ENCODE measurements at regions of chr6 and their contacts with region 1.

Region 1: DNA sequence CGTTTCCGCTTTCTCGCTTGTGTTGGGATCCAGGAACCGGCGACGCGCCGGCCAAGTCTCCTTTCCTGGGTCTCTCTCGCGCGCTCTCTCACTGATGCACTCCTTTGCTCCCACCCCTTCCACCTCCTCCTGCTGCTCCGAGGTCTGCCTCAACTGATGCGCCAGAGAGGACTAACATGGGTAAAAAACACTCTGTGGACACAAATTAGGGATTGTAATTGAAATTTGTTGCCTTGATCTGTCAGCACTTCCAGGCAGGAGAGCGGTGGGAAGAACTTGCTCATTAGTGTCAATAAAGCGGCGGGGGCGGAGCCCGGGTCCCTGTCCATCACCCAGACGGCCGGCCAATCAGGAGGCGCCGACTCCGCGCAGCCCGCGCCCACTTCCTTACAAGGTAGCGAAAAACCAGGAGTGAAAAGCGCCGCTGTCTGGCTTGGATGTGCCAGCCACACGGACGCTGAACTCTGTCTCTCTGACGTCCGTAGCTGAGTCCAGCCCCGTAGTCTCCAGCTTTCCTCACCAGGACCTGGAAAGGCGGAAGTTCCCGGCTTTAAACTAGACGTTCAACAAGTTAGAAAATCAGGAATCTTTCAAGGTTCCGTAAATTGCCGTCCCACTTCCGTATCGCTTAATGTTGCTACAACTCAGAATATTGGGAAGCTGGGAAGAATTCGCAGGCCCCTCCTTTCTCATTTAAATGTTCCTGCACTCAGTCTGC is at the start of gene TBX18:
- DNase-seq: peak; percentile 99
- H3K4me3 ChIP-seq: peak within 1 kb of the TSS; percentile 67 to 81 (median 72)
- H3K27ac ChIP-seq: peak within 1 kb of the TSS; percentile 93 to 98 (median 95)
- H3K4me1 ChIP-seq: peaks cover 11 to 44% (median 37%) of the 10 kb centered on the region in 4 donors
- H3K27me3 ChIP-seq: peaks cover 0 to 92% (median 51%) of the 10 kb centered on the region in 4 donors
- CTCF ChIP-seq: no peak
- EP300 ChIP-seq: peak; percentile 47
- POLR2A ChIP-seq: no peak
- total RNA-seq, gene TBX18: 8.7 to 17.4 (median 11.2) TPM

Region 2: GRCh38 chr6:84422380-84422968 is 342.0 kb before region 1 on chr6:
- intact Hi-C with region 1: loop called (anchors 5 kb)
- DNase-seq: no peak
- H3K4me3 ChIP-seq: no peak overlapping the region
- H3K27ac ChIP-seq: no peak overlapping the region
- H3K4me1 ChIP-seq: peaks cover 0 to 5% (median 2%) of the 10 kb centered on the region in 4 donors
- H3K27me3 ChIP-seq: peaks cover 0 to 38% (median 0%) of the 10 kb centered on the region in 4 donors
- CTCF ChIP-seq: peak; percentile 52 to 60 (median 53)
- EP300 ChIP-seq: no peak
- POLR2A ChIP-seq: no peak

Region 3: DNA sequence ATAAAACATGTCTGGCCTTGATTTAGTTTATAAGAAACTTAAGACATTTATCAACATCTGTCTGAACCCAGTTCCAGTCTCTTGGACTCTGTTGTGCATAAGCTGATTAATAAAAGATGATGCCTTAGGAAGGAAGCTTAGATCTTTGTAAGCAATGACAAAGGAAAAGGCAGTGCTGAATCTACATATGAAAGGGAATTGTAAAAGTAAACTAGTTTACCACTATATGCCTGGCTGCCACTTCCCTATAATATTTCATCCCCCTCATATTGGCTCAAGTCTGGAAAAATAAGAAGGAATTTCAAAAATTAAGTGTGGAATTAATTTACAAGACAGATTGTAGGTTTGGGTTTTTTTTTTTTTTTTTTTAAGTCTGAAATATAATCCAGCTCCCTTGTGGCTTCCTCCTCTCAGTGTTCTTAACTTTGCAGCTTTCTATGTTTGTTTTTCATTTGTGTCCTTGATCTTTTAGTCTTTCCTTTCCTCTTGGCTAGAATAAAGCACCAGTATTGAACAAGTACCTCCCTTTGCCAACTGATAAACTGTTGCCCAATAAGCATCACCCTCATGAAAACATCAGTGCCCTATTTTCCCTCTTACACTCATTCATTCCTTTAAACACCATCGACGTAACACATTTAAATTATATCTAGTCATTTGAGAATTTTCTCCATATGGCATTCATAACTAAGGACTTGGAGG is 146.6 kb after region 1 on chr6:
- intact Hi-C with region 1: no loop called
- DNase-seq: no peak
- H3K4me3 ChIP-seq: no peak overlapping the region
- H3K27ac ChIP-seq: no peak overlapping the region
- H3K4me1 ChIP-seq: no peaks in the 10 kb centered on the region
- H3K27me3 ChIP-seq: no peaks in the 10 kb centered on the region
- CTCF ChIP-seq: no peak
- EP300 ChIP-seq: no peak
- POLR2A ChIP-seq: no peak